Heart left ventricle (tissue), 16 donors: ENCODE measurements at regions of chr1 and their contacts with region 1.

Region 1: GRCh38 chr1:234499119-234499942 is 20.4 kb upstream of the TARBP1 start:
- DNase-seq: peak; percentile 89 to 95 (median 91)
- ATAC-seq: peak; percentile 93 to 98 (median 96)
- H3K4me3 ChIP-seq: peak overlapping the region in 7 of 12 donors; percentile 4 to 22 (median 9)
- H3K27ac ChIP-seq: peak overlapping the region; percentile 51 to 94 (median 86)
- H3K4me1 ChIP-seq: peaks cover 0 to 43% (median 22%) of the 10 kb centered on the region in 12 donors
- H3K27me3 ChIP-seq: no peaks in the 10 kb centered on the region
- CTCF ChIP-seq: peak; percentile 90 to 98 (median 96)
- POLR2A ChIP-seq: peak in 1 of 2 donors; percentile 20

Region 2: DNA sequence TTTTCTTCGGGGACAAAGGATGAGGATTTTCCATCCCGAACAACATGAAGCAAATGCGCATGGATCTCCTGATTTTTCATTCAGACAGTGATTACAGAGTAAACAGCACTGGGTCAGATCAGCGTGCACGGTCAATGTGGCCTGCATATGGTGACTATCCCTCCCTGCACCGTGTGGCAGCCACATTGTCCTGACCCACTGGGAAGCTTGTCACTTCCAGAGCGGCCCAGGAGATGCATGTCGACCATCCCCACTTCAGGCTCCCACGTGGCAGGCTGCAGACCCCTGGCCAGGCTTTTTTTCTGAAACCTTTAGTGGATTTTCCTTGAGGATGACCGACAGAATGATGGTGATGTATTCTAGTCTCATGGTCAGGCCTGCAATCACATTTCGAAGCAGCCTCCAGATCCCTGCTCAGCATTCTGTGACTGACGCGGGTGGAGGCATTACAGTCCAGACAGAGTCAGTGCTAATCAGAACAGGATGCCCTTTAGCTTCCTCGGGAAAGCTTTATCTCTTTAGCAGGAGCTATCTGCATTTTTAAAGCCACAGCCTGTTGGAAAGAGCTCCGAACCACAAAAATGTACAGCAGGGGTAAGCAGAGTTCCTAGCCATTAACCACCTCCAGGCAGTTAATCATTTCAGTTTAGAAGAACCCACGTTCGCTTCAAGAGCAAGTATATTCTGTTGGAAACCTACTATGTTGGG is 54.0 kb after region 1 on chr1:
- intact Hi-C with region 1: loop called in 1 of 10 experiments (anchors 5 kb)
- DNase-seq: peak in 2 of 5 donors; percentile 45 to 71
- ATAC-seq: peak; percentile 63 to 93 (median 90)
- H3K4me3 ChIP-seq: no peak overlapping the region
- H3K27ac ChIP-seq: peak overlapping the region in 11 of 12 donors; percentile 17 to 85 (median 68)
- H3K4me1 ChIP-seq: peaks cover 0 to 25% (median 19%) of the 10 kb centered on the region in 12 donors
- H3K27me3 ChIP-seq: no peaks in the 10 kb centered on the region
- CTCF ChIP-seq: no peak
- POLR2A ChIP-seq: no peak

Region 3: DNA sequence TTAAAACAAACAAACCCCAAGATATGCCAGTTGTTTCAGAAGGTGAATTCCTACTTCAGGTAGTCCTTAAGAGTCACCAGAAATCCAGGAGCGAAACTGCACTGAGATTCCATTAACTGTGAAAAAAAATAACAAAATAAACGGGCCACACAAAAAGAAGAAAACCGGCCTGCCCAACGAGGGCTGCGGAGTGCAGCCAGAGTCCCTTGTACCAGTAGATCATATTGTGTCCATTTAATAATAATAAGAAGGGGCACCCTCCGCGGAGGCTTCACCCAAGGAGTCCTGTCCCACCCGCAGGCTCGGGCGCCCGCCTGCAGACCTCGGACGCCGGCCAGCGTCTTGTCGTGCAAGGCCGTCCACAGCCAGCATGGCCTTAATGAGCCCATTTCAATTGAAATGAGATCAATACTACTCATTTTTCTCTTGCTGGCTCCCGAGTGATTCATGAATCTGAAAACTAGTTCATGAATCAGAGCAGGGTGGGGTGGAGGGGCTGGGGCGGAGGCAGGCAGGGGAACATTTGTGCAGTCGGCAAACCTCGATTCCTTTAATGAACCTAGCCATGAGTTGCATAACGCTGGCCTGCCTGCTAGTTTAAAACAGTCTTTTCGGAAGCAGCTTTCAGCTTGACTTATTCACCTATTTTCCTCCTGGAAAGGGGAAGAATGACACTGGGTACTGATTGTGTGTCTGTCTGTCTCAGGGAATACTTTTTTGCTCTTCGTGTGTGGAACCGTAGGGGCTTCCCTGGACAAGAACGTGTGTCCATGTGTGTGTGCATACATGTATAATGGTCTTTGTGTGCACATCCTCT is 223.8 kb after region 1 on chr1:
- intact Hi-C with region 1: loop called in 9 of 10 experiments (anchors 2 to 10 kb)
- DNase-seq: peak in 4 of 5 donors; percentile 66 to 79 (median 72)
- ATAC-seq: peak; percentile 6 to 39 (median 16)
- H3K4me3 ChIP-seq: peak overlapping the region in 7 of 12 donors; percentile 5 to 37 (median 26)
- H3K27ac ChIP-seq: peak overlapping the region; percentile 93 to 99 (median 99)
- H3K4me1 ChIP-seq: peaks cover 41 to 98% (median 92%) of the 10 kb centered on the region in 12 donors
- H3K27me3 ChIP-seq: no peaks in the 10 kb centered on the region
- CTCF ChIP-seq: no peak
- POLR2A ChIP-seq: no peak

Region 4: DNA sequence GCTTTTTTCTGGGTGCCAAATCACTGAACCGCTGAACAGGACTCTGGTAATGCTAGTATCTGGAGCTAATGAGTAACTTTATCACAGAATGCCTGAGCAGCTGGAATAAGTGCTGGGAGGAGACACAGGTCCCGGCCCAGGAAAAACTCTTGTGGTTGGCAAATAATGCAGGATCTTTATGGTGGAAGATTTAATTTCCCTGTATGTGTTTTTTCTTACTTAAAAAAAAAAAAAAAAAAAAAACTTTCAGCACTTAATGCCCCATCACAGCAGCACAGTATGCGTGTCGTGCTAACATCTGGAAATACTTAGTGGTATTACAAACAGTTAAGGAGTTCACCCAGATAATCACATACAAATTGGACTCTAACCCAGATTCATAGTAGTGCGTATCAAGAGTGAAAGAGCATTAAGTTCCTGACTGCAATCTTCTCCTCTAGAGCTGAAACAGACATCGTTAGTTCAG is 408.6 kb after region 1 on chr1:
- intact Hi-C with region 1: loop called in 1 of 10 experiments (anchors 5 kb)
- DNase-seq: no peak
- ATAC-seq: peak; percentile 46 to 81 (median 60)
- H3K4me3 ChIP-seq: no peak overlapping the region
- H3K27ac ChIP-seq: peak overlapping the region; percentile 0 to 90 (median 65)
- H3K4me1 ChIP-seq: peaks cover 6 to 54% (median 30%) of the 10 kb centered on the region in 12 donors
- H3K27me3 ChIP-seq: no peaks in the 10 kb centered on the region
- CTCF ChIP-seq: no peak
- POLR2A ChIP-seq: no peak

Region 5: DNA sequence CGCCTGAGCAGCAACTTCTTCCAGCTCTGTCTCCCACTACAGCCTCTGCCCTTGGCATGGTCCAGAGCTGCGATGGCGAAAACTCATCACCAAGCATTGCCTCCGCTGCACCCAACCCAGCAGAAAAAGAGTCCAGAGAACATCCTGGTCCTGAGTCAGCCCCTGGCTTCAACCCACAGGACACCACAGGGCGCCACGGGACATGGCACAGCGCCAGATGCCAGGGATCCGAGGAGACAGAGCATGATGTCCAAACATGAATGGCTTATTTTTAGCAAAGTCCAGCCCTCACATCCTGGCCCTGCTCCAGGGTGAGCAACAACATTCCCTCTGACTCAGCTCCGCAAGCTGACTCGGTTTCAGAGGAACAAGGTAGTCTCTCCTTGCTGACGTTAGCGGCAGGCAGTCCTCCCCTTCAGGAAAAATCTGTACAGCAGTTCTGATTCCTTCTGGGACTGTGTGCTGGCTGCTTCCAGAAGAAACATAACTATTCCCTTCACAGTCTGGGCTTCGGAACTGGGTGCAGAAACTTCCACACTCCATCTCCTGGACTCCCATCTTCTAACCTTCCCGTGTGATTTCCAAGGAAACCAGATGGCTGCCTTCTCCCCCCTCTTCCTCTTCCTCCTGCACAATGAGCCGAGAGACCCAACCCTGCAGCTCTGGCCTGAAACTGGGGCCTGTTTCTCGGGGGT is 498.0 kb after region 1 on chr1:
- intact Hi-C with region 1: loop called in 2 of 10 experiments (anchors 10 kb)
- DNase-seq: peak; percentile 95 to 100 (median 98)
- ATAC-seq: peak; percentile 94 to 96 (median 96)
- H3K4me3 ChIP-seq: peak overlapping the region in 7 of 12 donors; percentile 6 to 28 (median 18)
- H3K27ac ChIP-seq: peak overlapping the region; percentile 88 to 98 (median 93)
- H3K4me1 ChIP-seq: peaks cover 8 to 32% (median 26%) of the 10 kb centered on the region in 12 donors
- H3K27me3 ChIP-seq: no peaks in the 10 kb centered on the region
- CTCF ChIP-seq: peak in 1 of 12 donors; percentile 18
- POLR2A ChIP-seq: peak in 1 of 2 donors; percentile 62